Calu3 (cell line): ENCODE measurements at regions of chr6 and their contacts with region 1.

Region 1: DNA sequence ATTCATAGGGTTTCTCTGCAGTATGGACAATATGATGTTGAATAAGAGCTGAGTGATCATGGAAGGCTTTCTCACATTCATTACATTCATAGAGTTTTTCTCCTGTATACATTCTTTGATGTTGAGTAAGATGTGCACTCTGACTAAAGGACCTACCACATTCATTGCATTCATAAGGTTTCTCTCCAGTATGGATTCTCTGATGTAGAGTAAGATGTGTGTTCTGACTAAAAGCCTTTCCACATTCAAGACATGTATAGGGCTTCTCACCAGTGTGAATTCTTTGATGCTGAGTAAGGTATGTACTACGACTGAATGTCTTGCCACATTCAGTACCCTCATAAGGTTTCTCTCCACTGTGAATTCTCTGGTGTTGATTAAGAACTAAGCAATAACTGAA is 29.3 kb upstream of the ZNF391 start:
- DNase-seq: no peak
- H3K4me3 Mint-ChIP-seq: no peak overlapping the region
- H3K27ac Mint-ChIP-seq: no peak overlapping the region
- H3K4me1 Mint-ChIP-seq: no peaks in the 10 kb centered on the region
- H3K27me3 Mint-ChIP-seq: no peaks in the 10 kb centered on the region
- CTCF ChIP-seq: no peak

Region 2: GRCh38 chr6:27049863-27050781 is 309.1 kb before region 1 on chr6:
- CTCF ChIA-PET with region 1: no interaction called
- intact Hi-C with region 1: no loop called
- DNase-seq: no peak
- H3K4me3 Mint-ChIP-seq: no peak overlapping the region
- H3K27ac Mint-ChIP-seq: no peak overlapping the region
- H3K4me1 Mint-ChIP-seq: no peaks in the 10 kb centered on the region
- H3K27me3 Mint-ChIP-seq: no peaks in the 10 kb centered on the region
- CTCF ChIP-seq: no peak

Region 3: GRCh38 chr6:27318973-27319372 is 40.3 kb before region 1 on chr6:
- CTCF ChIA-PET with region 1: no interaction called
- intact Hi-C with region 1: loop called (anchors 2 kb)
- DNase-seq: no peak
- H3K4me3 Mint-ChIP-seq: no peak overlapping the region
- H3K27ac Mint-ChIP-seq: no peak overlapping the region
- H3K4me1 Mint-ChIP-seq: no peaks in the 10 kb centered on the region
- H3K27me3 Mint-ChIP-seq: no peaks in the 10 kb centered on the region
- CTCF ChIP-seq: no peak

Region 4: GRCh38 chr6:27694545-27694870 is 335.3 kb after region 1 on chr6:
- CTCF ChIA-PET with region 1: no interaction called
- intact Hi-C with region 1: no loop called
- DNase-seq: no peak
- H3K4me3 Mint-ChIP-seq: peak overlapping the region; percentile 94
- H3K27ac Mint-ChIP-seq: peak overlapping the region; percentile 98
- H3K4me1 Mint-ChIP-seq: no peaks in the 10 kb centered on the region
- H3K27me3 Mint-ChIP-seq: no peaks in the 10 kb centered on the region
- CTCF ChIP-seq: no peak